ENCODE measurements at regions of chr11 and their contacts with region 1.

Region 1: DNA sequence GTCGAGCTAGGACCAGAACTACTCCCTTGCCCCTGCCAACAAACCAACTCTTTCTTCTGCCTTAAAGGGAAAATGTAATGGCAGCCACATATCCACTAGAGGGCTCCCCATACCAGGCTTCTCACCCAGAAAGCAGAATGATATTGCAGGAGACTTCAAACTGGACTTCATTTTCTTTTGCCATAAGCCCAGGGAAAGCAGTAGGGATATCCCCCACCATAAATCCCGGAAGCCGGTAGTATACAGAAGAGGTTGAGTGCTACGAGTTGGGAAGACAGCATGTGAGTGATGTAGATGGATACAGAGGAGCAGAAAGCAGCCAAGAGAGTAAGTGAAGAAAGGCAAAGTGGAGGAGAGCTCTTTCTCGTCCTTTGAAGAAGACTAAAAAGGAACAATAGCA is 12.1 kb downstream of the PLAAT5 start:
- DNase-seq: peak; percentile 23
- ATAC-seq: peak; percentile 83
- H3K4me3 ChIP-seq: no peak overlapping the region
- H3K27ac ChIP-seq: no peak overlapping the region
- H3K4me1 ChIP-seq: no peaks in the 10 kb centered on the region
- H3K27me3 ChIP-seq: no peaks in the 10 kb centered on the region
- CTCF ChIP-seq: peak; percentile 83 to 96 (median 89); a peak in 5 of 6 replicates
- EP300 ChIP-seq: no peak
- POLR2A ChIP-seq: no peak
- RAD21 ChIP-seq: peak; percentile 100

Region 2: DNA sequence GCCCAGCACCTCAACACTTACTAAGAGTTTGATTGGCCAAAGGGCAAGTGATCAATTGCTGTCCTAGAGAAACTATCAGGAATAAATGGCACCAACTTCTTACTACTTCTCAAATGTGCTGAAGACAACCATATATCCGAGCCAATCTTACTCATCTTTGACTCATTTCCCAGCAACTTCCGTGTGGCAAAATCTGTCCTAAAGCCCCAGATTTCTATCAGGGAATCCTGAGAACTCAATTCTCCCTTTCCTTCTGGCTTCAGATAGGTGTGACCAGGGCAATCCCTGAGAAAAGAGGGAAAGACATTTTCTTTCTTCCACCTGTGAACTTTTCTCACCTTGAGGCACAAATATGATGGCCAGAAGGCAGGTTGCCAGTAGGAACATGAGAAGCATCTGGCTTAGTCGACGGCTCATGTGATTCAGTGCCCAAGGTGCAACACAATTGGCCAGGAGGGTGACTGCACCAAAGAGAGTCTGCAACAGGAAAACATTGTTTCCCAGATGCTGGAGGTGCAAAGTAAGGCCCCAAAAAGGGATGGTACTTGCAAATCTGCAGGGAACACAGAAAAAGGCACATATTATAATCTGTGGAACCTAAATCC is 313.1 kb before region 1 on chr11:
- CTCF ChIA-PET with region 1: no interaction called
- POLR2A ChIA-PET with region 1: no interaction called
- RAD21 ChIA-PET with region 1: no interaction called
- SMC1A ChIA-PET with region 1: no interaction called
- in situ Hi-C with region 1: no loop called
- intact Hi-C with region 1: no loop called
- DNase-seq: no peak
- ATAC-seq: no peak
- H3K4me3 ChIP-seq: no peak overlapping the region
- H3K27ac ChIP-seq: no peak overlapping the region
- H3K4me1 ChIP-seq: no peaks in the 10 kb centered on the region
- H3K27me3 ChIP-seq: no peaks in the 10 kb centered on the region; a peak in 2 of 4 replicates
- CTCF ChIP-seq: no peak
- EP300 ChIP-seq: no peak
- POLR2A ChIP-seq: no peak
- RAD21 ChIP-seq: no peak

Region 3: DNA sequence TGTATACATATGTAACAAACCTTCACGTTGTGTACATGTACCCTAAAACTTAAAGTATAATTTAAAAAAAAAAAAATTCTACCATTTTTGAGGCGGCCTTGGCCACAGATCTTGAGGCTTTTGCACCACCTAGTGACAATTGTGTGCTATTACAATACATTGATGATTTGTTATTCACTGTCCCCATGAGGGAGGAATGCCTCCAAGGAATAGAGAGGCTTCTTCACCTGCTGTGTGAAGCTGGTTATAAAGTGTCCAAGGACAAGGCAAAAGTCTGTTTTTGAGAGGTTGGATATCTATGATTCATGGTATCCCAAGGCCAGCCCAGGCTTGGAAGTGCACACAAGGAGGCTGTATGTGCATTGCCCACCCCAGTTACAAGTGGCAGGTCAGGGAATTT is 266.2 kb before region 1 on chr11:
- CTCF ChIA-PET with region 1: no interaction called
- POLR2A ChIA-PET with region 1: no interaction called
- RAD21 ChIA-PET with region 1: no interaction called
- SMC1A ChIA-PET with region 1: no interaction called
- in situ Hi-C with region 1: no loop called
- intact Hi-C with region 1: no loop called
- DNase-seq: no peak
- ATAC-seq: no peak; the same call in 2 of the 3 replicates
- H3K4me3 ChIP-seq: no peak overlapping the region
- H3K27ac ChIP-seq: no peak overlapping the region
- H3K4me1 ChIP-seq: no peaks in the 10 kb centered on the region
- H3K27me3 ChIP-seq: no peaks in the 10 kb centered on the region
- CTCF ChIP-seq: peak; percentile 42 to 51 (median 43); a peak in 4 of 6 replicates
- EP300 ChIP-seq: no peak
- POLR2A ChIP-seq: no peak
- RAD21 ChIP-seq: peak; percentile 51

Region 4: DNA sequence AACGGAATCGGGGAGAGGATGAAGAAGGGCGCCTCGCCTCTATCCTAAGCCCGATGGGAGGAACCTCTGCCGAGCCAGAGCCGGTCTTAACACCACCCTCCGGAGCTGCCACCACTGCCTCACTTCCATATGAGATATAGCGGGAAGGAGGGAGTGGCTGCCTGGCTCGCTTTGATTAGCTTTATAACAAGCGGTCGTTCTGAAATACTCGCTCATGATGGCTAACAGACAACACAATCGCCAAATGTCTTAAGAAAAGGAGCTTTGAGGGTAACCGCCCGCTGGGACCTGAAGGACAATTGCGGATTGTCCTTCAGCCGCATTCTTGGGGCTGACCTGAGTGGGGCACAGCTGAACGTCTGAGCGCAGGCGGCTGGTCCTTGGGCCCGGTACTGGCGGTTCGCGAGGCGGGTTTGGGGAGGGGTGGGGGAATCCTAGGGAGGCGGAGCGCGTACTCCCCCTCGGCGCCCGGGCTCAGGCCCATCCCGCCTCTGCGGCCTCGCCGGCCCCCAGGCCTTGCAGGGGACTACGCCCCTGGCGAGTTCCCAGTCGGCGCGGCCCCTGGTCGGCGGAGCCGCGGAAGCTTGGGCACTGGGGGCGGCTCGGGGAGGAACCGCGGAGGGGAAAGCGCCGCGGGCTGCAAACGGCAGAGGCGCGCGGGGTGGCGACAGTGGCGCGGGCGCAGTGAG is 11.8 kb after region 1 on chr11 and contains the start of gene PLAAT5:
- CTCF ChIA-PET with region 1: interaction called, 25 read pairs
- POLR2A ChIA-PET with region 1: no interaction called
- RAD21 ChIA-PET with region 1: interaction called, 7 read pairs
- SMC1A ChIA-PET with region 1: interaction called, 7 read pairs
- in situ Hi-C with region 1: no loop called
- intact Hi-C with region 1: no loop called
- DNase-seq: no peak
- ATAC-seq: no peak
- H3K4me3 ChIP-seq: no peak within 1 kb of the TSS
- H3K27ac ChIP-seq: no peak within 1 kb of the TSS
- H3K4me1 ChIP-seq: no peaks in the 10 kb centered on the region
- H3K27me3 ChIP-seq: peaks cover 3 to 8% of the 10 kb centered on the region in 2 experiments; a peak in 3 of 4 replicates
- CTCF ChIP-seq: no peak
- EP300 ChIP-seq: no peak
- POLR2A ChIP-seq: no peak
- RAD21 ChIP-seq: no peak
- polyA plus RNA-seq, gene PLAAT5: not detected

Region 5: GRCh38 chr11:63536669-63537292 is 57.9 kb after region 1 on chr11 and contains the start of gene PLAAT4:
- CTCF ChIA-PET with region 1: interaction called, 9 read pairs
- POLR2A ChIA-PET with region 1: no interaction called
- RAD21 ChIA-PET with region 1: interaction called, 7 read pairs
- SMC1A ChIA-PET with region 1: interaction called, 12 read pairs
- in situ Hi-C with region 1: no loop called
- intact Hi-C with region 1: no loop called
- DNase-seq: peak; percentile 45
- ATAC-seq: peak; percentile 62
- H3K4me3 ChIP-seq: peak within 1 kb of the TSS; percentile 70
- H3K27ac ChIP-seq: peak within 1 kb of the TSS; percentile 47
- H3K4me1 ChIP-seq: peaks cover 32% of the 10 kb centered on the region
- H3K27me3 ChIP-seq: no peaks in the 10 kb centered on the region
- CTCF ChIP-seq: no peak
- EP300 ChIP-seq: no peak
- POLR2A ChIP-seq: no peak
- RAD21 ChIP-seq: no peak
- polyA plus RNA-seq, gene PLAAT4: 23.7 to 34.3 TPM

Region 6: GRCh38 chr11:63592975-63593395 is 114.1 kb after region 1 on chr11:
- CTCF ChIA-PET with region 1: interaction called, 16 read pairs
- POLR2A ChIA-PET with region 1: no interaction called
- RAD21 ChIA-PET with region 1: no interaction called
- SMC1A ChIA-PET with region 1: interaction called, 19 read pairs
- in situ Hi-C with region 1: no loop called
- intact Hi-C with region 1: no loop called
- DNase-seq: no peak
- ATAC-seq: peak; percentile 69
- H3K4me3 ChIP-seq: no peak overlapping the region
- H3K27ac ChIP-seq: no peak overlapping the region
- H3K4me1 ChIP-seq: no peaks in the 10 kb centered on the region
- H3K27me3 ChIP-seq: no peaks in the 10 kb centered on the region
- CTCF ChIP-seq: peak; percentile 66 to 79 (median 75)
- EP300 ChIP-seq: no peak
- POLR2A ChIP-seq: no peak
- RAD21 ChIP-seq: peak; percentile 70

Region 7: DNA sequence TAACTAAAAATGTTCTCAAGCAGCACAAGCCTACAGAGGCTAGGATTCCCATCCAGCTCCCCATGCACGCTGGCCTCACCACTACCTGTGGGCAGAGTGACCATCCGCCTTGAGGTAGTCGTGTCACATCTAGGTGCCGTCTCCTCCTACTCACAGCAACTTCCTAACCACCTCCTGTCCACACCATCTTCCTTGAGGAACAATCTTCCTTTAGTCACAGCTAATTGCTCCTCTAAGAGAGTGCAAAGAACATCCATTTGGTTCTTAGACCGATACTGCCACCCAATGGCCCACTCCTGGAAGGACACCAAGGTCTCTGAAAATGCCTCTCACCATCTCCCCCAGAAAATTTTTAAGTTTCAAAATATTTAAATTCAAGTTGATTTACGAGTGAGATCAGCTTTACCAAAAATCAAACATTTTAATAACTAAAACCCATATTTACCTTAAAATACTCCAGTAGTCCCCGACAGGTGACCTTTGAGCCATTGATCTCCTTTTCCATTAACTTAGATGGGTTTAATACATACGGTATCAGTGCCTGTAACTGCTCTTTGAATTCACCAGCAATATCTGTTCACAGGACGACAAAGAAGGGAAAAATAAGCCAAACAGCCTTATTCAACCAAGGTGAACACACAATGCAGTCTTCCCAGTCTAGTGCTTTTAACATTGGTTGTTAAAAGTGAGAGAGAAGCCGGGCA is 157.0 kb after region 1 on chr11:
- CTCF ChIA-PET with region 1: interaction called, 206 read pairs
- POLR2A ChIA-PET with region 1: no interaction called
- RAD21 ChIA-PET with region 1: interaction called, 113 read pairs
- SMC1A ChIA-PET with region 1: interaction called, 112 read pairs
- in situ Hi-C with region 1: loop called (anchors 5 kb)
- intact Hi-C with region 1: loop called (anchors 1 kb)
- DNase-seq: peak; percentile 20
- ATAC-seq: peak; percentile 82
- H3K4me3 ChIP-seq: no peak overlapping the region
- H3K27ac ChIP-seq: no peak overlapping the region
- H3K4me1 ChIP-seq: peaks cover 8% of the 10 kb centered on the region
- H3K27me3 ChIP-seq: no peaks in the 10 kb centered on the region
- CTCF ChIP-seq: peak; percentile 78 to 92 (median 79)
- EP300 ChIP-seq: no peak
- POLR2A ChIP-seq: no peak
- RAD21 ChIP-seq: peak; percentile 98

Measured in GM12878 (cell line).